ENCODE measurements at regions of chr16 and their contacts with region 1.

Region 1: GRCh38 chr16:89507834-89508590 is at the start of gene SPG7:
- DNase-seq: peak; percentile 85 to 92
- ATAC-seq: peak; percentile 95 to 97 (median 96)
- H3K4me3 ChIP-seq: peak within 1 kb of the TSS; percentile 97
- H3K27ac ChIP-seq: peak within 1 kb of the TSS; percentile 95
- H3K4me1 ChIP-seq: peaks cover 23% of the 10 kb centered on the region
- H3K27me3 ChIP-seq: no peaks in the 10 kb centered on the region
- CTCF ChIP-seq: no peak
- total RNA-seq, gene SPG7: 66.8 to 92.3 (median 87.3) TPM

Region 2: GRCh38 chr16:89330177-89330856 is 177.7 kb before region 1 on chr16:
- intact Hi-C with region 1: loop called in 1 of 2 experiments (anchors 1 kb)
- DNase-seq: peak in 1 of 2 donors; percentile 69
- ATAC-seq: peak; percentile 10 to 38 (median 28)
- H3K4me3 ChIP-seq: peak overlapping the region; percentile 25
- H3K27ac ChIP-seq: peak overlapping the region; percentile 96
- H3K4me1 ChIP-seq: peaks cover 78% of the 10 kb centered on the region
- H3K27me3 ChIP-seq: no peaks in the 10 kb centered on the region
- CTCF ChIP-seq: no peak

Region 3: DNA sequence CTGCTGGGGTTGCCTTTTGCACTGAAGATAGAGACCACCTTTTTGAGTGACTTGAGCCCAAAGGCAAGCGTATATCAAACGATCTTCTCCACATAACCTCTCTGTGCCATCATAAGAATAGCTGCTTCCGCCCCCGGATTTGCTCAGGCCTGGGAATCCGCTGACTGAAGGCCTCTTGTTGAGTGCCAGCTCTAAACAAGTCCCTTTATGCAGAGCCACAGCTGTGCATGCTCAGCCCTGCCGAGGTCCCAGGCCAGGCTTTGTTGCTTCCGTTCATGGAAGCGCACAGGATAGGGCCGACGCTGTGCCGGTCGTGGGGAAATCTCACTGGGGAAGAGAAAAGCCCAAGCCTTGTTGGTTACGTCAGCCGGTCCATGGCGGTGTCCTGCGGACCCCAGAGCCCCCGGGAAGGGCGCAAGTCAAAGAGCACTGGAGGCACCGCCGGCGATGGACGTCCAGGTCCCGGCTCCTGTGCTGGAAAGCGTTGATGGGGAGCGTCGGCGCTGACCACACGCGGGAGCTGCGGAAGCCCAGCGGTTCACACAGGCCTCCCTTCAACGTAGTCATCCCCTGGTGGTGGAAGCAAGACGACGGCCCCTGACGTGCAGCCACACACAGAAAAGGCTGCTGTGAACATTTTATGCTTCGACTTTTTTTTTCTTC is 29.0 kb after region 1 on chr16:
- intact Hi-C with region 1: no loop called
- DNase-seq: no peak
- ATAC-seq: no peak
- H3K4me3 ChIP-seq: no peak overlapping the region
- H3K27ac ChIP-seq: no peak overlapping the region
- H3K4me1 ChIP-seq: peaks cover 21% of the 10 kb centered on the region
- H3K27me3 ChIP-seq: no peaks in the 10 kb centered on the region
- CTCF ChIP-seq: no peak

Region 4: DNA sequence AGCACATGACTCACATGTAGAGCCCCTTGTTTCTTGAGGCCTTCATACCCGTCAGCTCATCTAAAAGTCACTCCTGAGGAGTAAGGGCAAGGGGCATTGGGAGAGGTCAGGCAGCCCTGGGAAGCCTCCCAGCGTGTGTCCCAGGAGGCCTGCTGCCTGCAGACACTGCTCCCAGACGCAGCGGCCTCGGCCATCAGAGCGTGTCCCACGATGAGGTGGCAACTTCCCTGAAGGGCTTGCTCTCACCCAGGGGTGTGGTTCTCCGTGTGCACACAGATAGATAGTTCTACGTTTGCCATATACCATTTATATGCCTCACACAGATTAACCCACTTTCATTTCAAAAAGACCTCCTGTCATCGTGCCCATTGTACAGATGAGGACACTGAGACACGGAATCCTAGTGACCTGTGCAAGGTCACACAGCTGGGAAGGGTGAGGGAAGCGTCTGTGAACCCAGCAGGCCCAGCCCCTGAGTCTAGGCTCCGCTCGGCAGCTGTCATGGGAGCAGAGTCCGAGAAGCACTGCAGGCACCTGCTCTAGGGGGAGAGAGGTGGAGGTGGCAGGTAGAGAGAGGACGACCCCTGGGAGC is 423.4 kb after region 1 on chr16:
- intact Hi-C with region 1: no loop called
- DNase-seq: no peak
- ATAC-seq: no peak
- H3K4me3 ChIP-seq: no peak overlapping the region
- H3K27ac ChIP-seq: no peak overlapping the region
- H3K4me1 ChIP-seq: no peaks in the 10 kb centered on the region
- H3K27me3 ChIP-seq: peaks cover 0 to 4% (median 3%) of the 10 kb centered on the region in 3 donors
- CTCF ChIP-seq: no peak

Measured in psoas muscle (tissue), 8 donors.